ENCODE measurements at regions of chr7 and their contacts with region 1.

Region 1: GRCh38 chr7:115356139-115356746 is 434.3 kb downstream of the MDFIC start:
- DNase-seq: peak; percentile 21
- ATAC-seq: peak; percentile 63
- H3K4me3 ChIP-seq: no peak overlapping the region
- H3K27ac ChIP-seq: no peak overlapping the region
- H3K4me1 ChIP-seq: no peaks in the 10 kb centered on the region
- H3K27me3 ChIP-seq: no peaks in the 10 kb centered on the region
- CTCF ChIP-seq: peak; percentile 28 to 56 (median 45); a peak in 5 of 6 replicates
- POLR2A ChIP-seq: no peak
- RAD21 ChIP-seq: peak; percentile 51

Region 2: DNA sequence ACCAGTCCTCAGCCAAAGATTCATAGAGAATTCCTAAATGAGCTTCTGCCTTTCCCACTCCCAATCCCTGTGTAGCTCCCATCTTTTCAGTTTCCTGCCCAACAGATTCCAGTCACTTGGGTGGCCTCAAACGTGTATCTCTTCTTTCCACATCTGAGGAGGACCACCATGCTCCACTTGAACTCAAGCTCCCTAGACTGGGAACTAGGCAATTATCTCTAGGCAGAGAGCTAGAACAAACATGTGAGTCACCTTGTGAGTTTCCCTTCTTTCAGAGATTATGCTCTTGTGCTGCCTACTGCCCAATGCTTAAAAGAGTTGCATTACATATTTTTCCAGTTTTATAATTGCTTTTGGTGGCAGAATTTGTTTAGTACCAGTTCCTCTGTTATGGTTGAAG is 256.3 kb before region 1 on chr7:
- CTCF ChIA-PET with region 1: no interaction called
- POLR2A ChIA-PET with region 1: no interaction called
- RAD21 ChIA-PET with region 1: no interaction called
- intact Hi-C with region 1: loop called (anchors 10 kb)
- DNase-seq: no peak
- ATAC-seq: peak; percentile 57
- H3K4me3 ChIP-seq: no peak overlapping the region
- H3K27ac ChIP-seq: no peak overlapping the region
- H3K4me1 ChIP-seq: peaks cover 13 to 18% of the 10 kb centered on the region in 2 experiments; a peak in 3 of 4 replicates
- H3K27me3 ChIP-seq: no peaks in the 10 kb centered on the region
- CTCF ChIP-seq: no peak
- POLR2A ChIP-seq: no peak
- RAD21 ChIP-seq: no peak

Region 3: GRCh38 chr7:115410972-115411686 is 54.9 kb after region 1 on chr7:
- CTCF ChIA-PET with region 1: no interaction called
- POLR2A ChIA-PET with region 1: no interaction called
- RAD21 ChIA-PET with region 1: no interaction called
- intact Hi-C with region 1: no loop called
- DNase-seq: no peak
- ATAC-seq: no peak
- H3K4me3 ChIP-seq: no peak overlapping the region
- H3K27ac ChIP-seq: no peak overlapping the region
- H3K4me1 ChIP-seq: no peaks in the 10 kb centered on the region
- H3K27me3 ChIP-seq: no peaks in the 10 kb centered on the region
- CTCF ChIP-seq: no peak
- POLR2A ChIP-seq: no peak
- RAD21 ChIP-seq: no peak

Measured in HCT116 (cell line).